Common myeloid progenitor, CD34-positive (primary cell): ENCODE measurements at regions of chr17 and their contacts with region 1.

Region 1: GRCh38 chr17:49851387-49852291 is 3.8 kb upstream of the TAC4 start:
- DNase-seq: peak; percentile 79 to 91 (median 90)
- H3K4me3 ChIP-seq: peak overlapping the region; percentile 28 to 79 (median 66)
- H3K27ac ChIP-seq: peak overlapping the region in 1 of 2 experiments; percentile 20
- H3K4me1 ChIP-seq: peaks cover 0 to 49% (median 31%) of the 10 kb centered on the region in 4 experiments
- H3K27me3 ChIP-seq: no peaks in the 10 kb centered on the region

Region 2: DNA sequence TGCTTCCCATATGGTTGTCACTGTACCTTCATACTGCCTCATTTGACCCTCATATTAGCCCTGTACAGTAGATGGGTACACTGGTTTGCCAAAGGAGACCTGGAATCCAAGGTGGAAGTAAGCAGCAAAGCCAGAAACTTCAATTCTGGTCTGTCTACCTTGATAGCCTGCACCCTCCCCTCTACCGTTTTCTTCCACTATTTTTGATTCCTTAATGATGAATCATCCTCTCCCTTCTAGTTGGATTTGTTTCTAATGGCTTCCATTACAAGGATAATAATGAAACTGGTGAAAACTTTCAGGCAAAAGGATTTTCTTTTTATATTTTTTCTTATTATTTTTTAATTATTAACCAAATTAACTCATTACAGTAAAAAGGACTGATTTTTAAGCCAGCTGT is 21.0 kb before region 1 on chr17:
- CTCF ChIA-PET with region 1: interaction called, 20 read pairs
- POLR2A ChIA-PET with region 1: interaction called, 5 read pairs
- DNase-seq: no peak
- H3K4me3 ChIP-seq: no peak overlapping the region
- H3K27ac ChIP-seq: no peak overlapping the region
- H3K4me1 ChIP-seq: peaks cover 8 to 43% (median 30%) of the 10 kb centered on the region in 4 experiments
- H3K27me3 ChIP-seq: no peaks in the 10 kb centered on the region